SK-N-SH (cell line): ENCODE measurements at regions of chr12 and their contacts with region 1.

Region 1: DNA sequence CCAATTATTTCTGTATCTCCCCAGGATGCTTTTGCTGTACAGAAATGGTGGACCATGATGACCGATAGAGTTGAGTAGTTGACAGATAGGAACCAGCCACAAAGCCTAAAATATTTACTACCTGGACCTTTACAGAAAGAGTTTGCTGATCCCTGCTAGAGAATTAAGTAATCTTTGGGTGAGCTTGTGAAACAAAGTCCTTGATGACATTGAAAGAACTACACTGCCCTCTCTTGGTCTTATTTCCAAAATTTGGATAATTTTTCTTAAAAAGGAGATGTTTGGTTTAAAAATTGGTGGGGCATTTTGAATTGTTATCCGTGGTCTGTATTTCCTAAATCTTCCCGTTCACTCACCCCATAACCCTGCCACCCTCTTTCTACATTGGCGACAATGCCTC is 13.7 kb upstream of the TCTN1 start:
- DNase-seq: peak; percentile 30
- H3K4me3 ChIP-seq: no peak overlapping the region
- H3K27ac ChIP-seq: no peak overlapping the region
- H3K4me1 ChIP-seq: no peaks in the 10 kb centered on the region
- H3K27me3 ChIP-seq: no peaks in the 10 kb centered on the region
- CTCF ChIP-seq: peak; percentile 67
- EP300 ChIP-seq: no peak
- RAD21 ChIP-seq: peak; percentile 81

Region 2: DNA sequence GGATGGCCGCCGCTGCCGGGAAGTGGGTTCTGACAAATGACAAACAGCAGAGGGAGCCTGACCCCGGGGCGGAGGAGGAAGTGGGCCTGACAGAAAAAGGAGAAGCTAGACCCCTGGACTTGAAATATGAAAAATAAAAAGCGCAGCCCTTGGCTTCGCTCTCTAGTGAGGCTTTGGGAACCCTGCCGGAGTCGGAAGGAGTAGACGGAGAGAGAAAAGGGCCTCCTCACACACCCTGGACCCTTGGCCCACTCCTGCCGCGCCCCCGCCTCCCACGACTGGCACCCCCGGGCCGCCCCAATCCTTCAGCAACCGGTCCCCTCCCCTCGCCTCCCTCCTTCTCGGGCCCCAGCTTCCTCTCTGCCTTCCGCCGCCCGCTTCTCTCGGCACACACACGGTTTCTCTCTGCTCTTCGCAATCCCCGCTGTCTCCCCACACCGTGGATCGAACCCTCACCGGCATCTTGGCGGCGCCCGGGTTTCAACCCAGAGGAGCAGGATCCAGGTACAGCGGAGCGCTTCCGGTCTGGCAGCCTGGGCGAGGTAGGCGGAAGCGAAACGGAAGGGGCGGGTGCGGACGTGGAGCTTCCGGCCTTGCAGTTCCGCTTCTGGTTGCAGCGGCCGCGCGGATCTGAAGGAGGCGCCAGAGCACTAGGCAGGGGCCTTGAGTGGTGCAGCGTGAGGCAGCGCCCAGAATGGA is 150.3 kb before region 1 on chr12 and contains the start of gene ARPC3:
- CTCF ChIA-PET with region 1: interaction called, 101 read pairs
- POLR2A ChIA-PET with region 1: interaction called, 10 read pairs
- DNase-seq: peak; percentile 93
- H3K4me3 ChIP-seq: peak within 1 kb of the TSS; percentile 71 to 87
- H3K27ac ChIP-seq: peak within 1 kb of the TSS; percentile 90 to 93
- H3K4me1 ChIP-seq: no peaks in the 10 kb centered on the region; a peak in 1 of 4 replicates
- H3K27me3 ChIP-seq: no peaks in the 10 kb centered on the region
- CTCF ChIP-seq: peak; percentile 85
- EP300 ChIP-seq: no peak
- RAD21 ChIP-seq: peak; percentile 85
- polyA plus RNA-seq, gene ARPC3: 50.5 and 74.7 TPM in 2 replicates

Region 3: GRCh38 chr12:110508071-110508586 is 92.1 kb before region 1 on chr12:
- CTCF ChIA-PET with region 1: interaction called, 55 read pairs
- POLR2A ChIA-PET with region 1: no interaction called
- DNase-seq: no peak
- H3K4me3 ChIP-seq: no peak overlapping the region
- H3K27ac ChIP-seq: no peak overlapping the region
- H3K4me1 ChIP-seq: no peaks in the 10 kb centered on the region
- H3K27me3 ChIP-seq: no peaks in the 10 kb centered on the region
- CTCF ChIP-seq: no peak
- EP300 ChIP-seq: no peak
- RAD21 ChIP-seq: no peak

Region 4: DNA sequence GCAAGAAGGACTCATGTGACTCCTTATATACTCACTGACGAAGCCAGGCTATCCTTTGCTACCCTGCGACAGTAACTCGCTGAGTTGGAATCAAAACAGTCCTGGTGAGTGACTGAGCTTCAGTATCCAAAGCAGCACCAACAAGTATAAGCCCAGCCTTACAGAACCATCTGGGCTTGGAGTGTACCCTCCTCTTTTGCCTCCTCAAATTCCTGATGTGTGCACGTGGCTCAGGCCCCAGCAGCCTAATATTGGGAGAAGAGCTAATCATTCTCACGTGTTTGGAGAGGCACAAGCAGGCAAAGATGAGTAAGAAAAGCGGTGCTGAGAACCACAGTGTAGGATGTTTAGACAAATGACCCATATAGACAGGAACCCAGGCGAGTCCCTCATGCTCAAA is 51.6 kb before region 1 on chr12:
- CTCF ChIA-PET with region 1: interaction called, 87 read pairs
- POLR2A ChIA-PET with region 1: no interaction called
- DNase-seq: no peak
- H3K4me3 ChIP-seq: no peak overlapping the region
- H3K27ac ChIP-seq: peak overlapping the region in 1 of 2 experiments; percentile 5; a peak in 1 of 4 replicates
- H3K4me1 ChIP-seq: peaks cover 3 to 21% of the 10 kb centered on the region in 2 experiments; a peak in 3 of 4 replicates
- H3K27me3 ChIP-seq: no peaks in the 10 kb centered on the region
- CTCF ChIP-seq: no peak
- EP300 ChIP-seq: no peak
- RAD21 ChIP-seq: no peak

Region 5: GRCh38 chr12:110577717-110578521 is 22.3 kb before region 1 on chr12:
- CTCF ChIA-PET with region 1: interaction called, 11 read pairs
- POLR2A ChIA-PET with region 1: no interaction called
- DNase-seq: no peak
- H3K4me3 ChIP-seq: peak overlapping the region in 1 of 2 experiments; percentile 34; a peak in 1 of 4 replicates
- H3K27ac ChIP-seq: peak overlapping the region in 1 of 2 experiments; percentile 91; a peak in 2 of 4 replicates
- H3K4me1 ChIP-seq: peaks cover 0 to 23% of the 10 kb centered on the region in 2 experiments; a peak in 2 of 4 replicates
- H3K27me3 ChIP-seq: no peaks in the 10 kb centered on the region
- CTCF ChIP-seq: no peak
- EP300 ChIP-seq: no peak; a peak in 1 of 4 replicates
- RAD21 ChIP-seq: no peak

Region 6: GRCh38 chr12:110613771-110614684 is 13.8 kb after region 1 on chr12 and contains the start of gene TCTN1:
- CTCF ChIA-PET with region 1: interaction called, 30 read pairs
- POLR2A ChIA-PET with region 1: interaction called, 3 read pairs
- DNase-seq: peak; percentile 98
- H3K4me3 ChIP-seq: peak within 1 kb of the TSS; percentile 64 to 70
- H3K27ac ChIP-seq: peak within 1 kb of the TSS; percentile 4 to 46; a peak in 2 of 4 replicates
- H3K4me1 ChIP-seq: peaks cover 2 to 12% of the 10 kb centered on the region in 2 experiments; a peak in 3 of 4 replicates
- H3K27me3 ChIP-seq: no peaks in the 10 kb centered on the region
- CTCF ChIP-seq: no peak
- EP300 ChIP-seq: peak in 1 of 2 experiments; percentile 46; a peak in 2 of 4 replicates
- RAD21 ChIP-seq: no peak
- polyA plus RNA-seq, gene TCTN1: 40.2 and 43.2 TPM in 2 replicates